H1 (cell line): ENCODE measurements at regions of chr4 and their contacts with region 1.

Region 1: GRCh38 chr4:183504064-183504929 is 561 bp upstream of the ING2 start:
- DNase-seq: peak; percentile 91 to 99
- H3K4me3 ChIP-seq: peak overlapping the region; percentile 73 to 100 (median 90)
- H3K27ac ChIP-seq: peak overlapping the region; percentile 95
- H3K4me1 ChIP-seq: peaks cover 0 to 5% (median 1%) of the 10 kb centered on the region in 4 experiments; a peak in 2 of 7 replicates
- H3K27me3 ChIP-seq: no peaks in the 10 kb centered on the region
- CTCF ChIP-seq: peak in 1 of 3 experiments; percentile 1; a peak in 1 of 4 replicates
- EP300 ChIP-seq: 0 out of 3 replicates have a peak, but pooled peaks of 1 of the 2 experiments have one; percentile 48
- POLR2A ChIP-seq: peak; percentile 77 to 83
- RAD21 ChIP-seq: peak; percentile 7 to 37; a peak in 3 of 4 replicates

Region 2: DNA sequence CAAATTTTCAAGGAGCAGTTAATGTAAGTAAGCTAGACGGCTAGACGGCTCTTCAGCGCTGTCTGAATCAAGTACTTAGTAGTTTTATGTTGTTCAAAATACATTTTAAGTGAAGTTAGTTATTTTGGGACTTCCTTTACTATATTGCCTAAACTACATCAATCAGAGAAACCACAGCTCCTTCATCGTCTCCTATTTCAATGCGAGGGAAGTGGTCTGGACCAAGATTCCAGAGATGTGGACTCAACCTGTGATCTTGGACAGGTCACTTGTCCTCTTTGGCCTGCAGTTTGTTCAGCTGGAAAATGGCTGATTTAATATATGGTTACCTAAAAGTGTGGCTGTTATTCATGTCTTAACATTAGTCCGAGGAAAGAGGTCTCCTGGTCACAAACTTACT is 11.1 kb after region 1 on chr4:
- CTCF ChIA-PET with region 1: no interaction called
- POLR2A ChIA-PET with region 1: interaction called, 12 read pairs
- DNase-seq: no peak
- H3K4me3 ChIP-seq: no peak overlapping the region
- H3K27ac ChIP-seq: no peak overlapping the region
- H3K4me1 ChIP-seq: peaks cover 0 to 3% (median 1%) of the 10 kb centered on the region in 4 experiments; a peak in 1 of 7 replicates
- H3K27me3 ChIP-seq: no peaks in the 10 kb centered on the region
- CTCF ChIP-seq: no peak
- EP300 ChIP-seq: no peak
- POLR2A ChIP-seq: no peak
- RAD21 ChIP-seq: no peak

Region 3: DNA sequence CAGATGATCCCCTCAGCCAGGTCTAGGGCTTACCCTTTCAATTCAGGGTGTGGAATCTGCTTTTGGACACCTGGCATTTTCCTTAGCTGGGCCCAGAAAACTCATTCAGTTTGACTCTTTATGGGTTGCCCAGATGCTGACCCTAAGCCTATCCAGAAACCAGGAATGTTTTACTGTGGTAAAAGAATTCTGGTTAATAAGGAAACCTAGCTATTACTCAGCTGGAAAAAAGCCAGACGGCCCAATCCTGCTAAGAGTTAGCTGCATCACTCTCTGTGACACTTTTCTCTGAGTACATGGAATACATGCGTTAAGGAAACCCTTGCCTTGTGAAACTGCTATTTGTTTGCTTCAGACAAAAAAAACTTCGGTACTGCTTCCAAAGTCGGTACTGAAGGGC is 28.5 kb after region 1 on chr4:
- CTCF ChIA-PET with region 1: interaction called, 3 read pairs
- POLR2A ChIA-PET with region 1: interaction called, 10 read pairs
- DNase-seq: no peak
- H3K4me3 ChIP-seq: no peak overlapping the region
- H3K27ac ChIP-seq: no peak overlapping the region
- H3K4me1 ChIP-seq: peaks cover 0 to 3% (median 1%) of the 10 kb centered on the region in 4 experiments; a peak in 3 of 7 replicates
- H3K27me3 ChIP-seq: no peaks in the 10 kb centered on the region; a peak in 1 of 7 replicates
- CTCF ChIP-seq: no peak
- EP300 ChIP-seq: no peak
- POLR2A ChIP-seq: no peak
- RAD21 ChIP-seq: no peak

Region 4: GRCh38 chr4:183686461-183686860 is 182.2 kb after region 1 on chr4:
- CTCF ChIA-PET with region 1: no interaction called
- POLR2A ChIA-PET with region 1: no interaction called
- DNase-seq: no peak
- H3K4me3 ChIP-seq: no peak overlapping the region
- H3K27ac ChIP-seq: no peak overlapping the region
- H3K4me1 ChIP-seq: no peaks in the 10 kb centered on the region
- H3K27me3 ChIP-seq: no peaks in the 10 kb centered on the region
- CTCF ChIP-seq: no peak
- EP300 ChIP-seq: no peak
- POLR2A ChIP-seq: no peak
- RAD21 ChIP-seq: no peak

Region 5: GRCh38 chr4:183808097-183808456 is 303.8 kb after region 1 on chr4:
- CTCF ChIA-PET with region 1: no interaction called
- POLR2A ChIA-PET with region 1: no interaction called
- DNase-seq: no peak
- H3K4me3 ChIP-seq: no peak overlapping the region
- H3K27ac ChIP-seq: no peak overlapping the region
- H3K4me1 ChIP-seq: 0 out of 7 replicates have a peak, but pooled peaks cover 0 to 3% (median 0%) of the 10 kb centered on the region in 4 experiments
- H3K27me3 ChIP-seq: no peaks in the 10 kb centered on the region
- CTCF ChIP-seq: no peak
- EP300 ChIP-seq: no peak
- POLR2A ChIP-seq: no peak
- RAD21 ChIP-seq: no peak